ENCODE measurements at regions of chr13 and their contacts with region 1.

Region 1: DNA sequence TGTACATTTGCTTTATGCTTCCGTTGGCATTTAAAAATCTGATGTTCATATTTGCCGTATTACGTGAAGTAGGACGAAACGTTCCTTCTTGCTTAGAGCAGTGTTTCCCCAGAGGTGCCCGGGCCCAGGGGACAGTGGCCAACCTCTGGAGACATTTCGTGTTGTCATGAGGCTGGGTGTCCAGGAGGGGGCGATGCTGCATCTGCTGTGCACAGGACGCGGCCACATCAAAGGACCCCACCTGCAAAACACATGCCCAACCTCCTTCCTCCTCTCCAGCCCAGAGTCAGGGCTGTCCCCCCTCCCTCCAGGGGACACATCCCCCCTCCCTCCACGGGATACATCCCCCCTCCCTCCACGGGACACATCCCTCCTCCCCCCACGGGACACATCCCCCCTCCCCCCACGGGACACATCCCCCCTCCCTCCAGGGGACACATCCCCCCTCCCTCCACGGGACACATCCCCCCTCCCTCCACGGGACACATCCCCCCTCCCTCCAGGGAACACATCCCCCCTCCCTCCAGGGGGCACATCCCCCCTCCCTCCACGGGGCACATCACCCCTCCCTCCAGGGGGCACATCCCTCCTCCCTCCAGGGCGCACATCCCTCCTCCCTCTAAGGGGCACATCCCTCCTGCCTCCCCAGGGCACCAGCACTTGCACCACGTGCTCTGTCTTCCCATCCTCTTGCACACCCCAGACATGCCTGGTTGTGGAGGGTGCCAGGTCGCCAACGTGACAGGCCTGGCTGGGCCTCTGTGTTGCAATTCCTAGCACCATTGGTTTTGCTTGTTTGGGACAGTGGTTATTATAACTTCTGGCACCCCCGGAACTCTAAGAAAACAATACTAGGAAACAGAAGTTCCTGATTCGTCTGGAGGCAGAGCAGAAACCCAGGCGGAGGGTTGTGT is 46.7 kb downstream of the GAS6 start:
- DNase-seq: no peak
- H3K4me3 ChIP-seq: no peak overlapping the region
- H3K27ac ChIP-seq: peak overlapping the region; percentile 93
- H3K4me1 ChIP-seq: peaks cover 58% of the 10 kb centered on the region
- H3K27me3 ChIP-seq: no peaks in the 10 kb centered on the region
- CTCF ChIP-seq: peak; percentile 79 to 90 (median 83)
- POLR2A ChIP-seq: no peak

Region 2: DNA sequence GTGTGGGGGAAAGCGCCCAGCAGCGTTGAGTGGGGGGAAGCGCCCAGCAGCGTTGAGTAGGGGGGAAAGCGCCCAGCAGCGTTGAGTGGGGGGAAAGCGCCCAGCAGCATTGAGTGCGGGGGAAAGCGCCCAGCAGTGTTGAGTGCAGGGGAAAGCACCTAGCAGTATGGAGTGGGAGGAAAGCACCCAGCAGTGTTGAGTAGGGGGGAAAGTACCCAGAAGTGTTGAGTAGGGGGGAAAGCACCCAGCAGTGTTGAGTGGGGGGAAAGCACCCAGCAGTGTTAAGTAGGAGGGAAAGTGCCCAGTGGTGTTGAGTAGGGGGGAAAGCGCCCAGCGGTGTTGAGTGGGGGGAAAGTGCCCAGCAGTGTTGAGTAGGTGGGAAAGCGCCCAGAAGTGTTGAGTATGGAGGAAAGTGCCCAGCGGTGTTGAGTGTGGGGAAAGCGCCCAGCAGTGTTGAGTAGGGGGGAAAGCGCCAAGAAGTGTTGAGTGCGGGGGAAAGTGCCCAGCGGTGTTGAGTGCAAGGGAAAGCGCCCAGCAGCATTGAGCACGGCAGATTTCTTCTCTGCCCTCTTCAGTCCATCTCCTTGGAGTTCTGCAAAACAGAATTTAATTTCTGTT is 989.0 kb before region 1 on chr13:
- intact Hi-C with region 1: no loop called
- DNase-seq: no peak
- H3K4me3 ChIP-seq: no peak overlapping the region
- H3K27ac ChIP-seq: no peak overlapping the region
- H3K4me1 ChIP-seq: no peaks in the 10 kb centered on the region
- H3K27me3 ChIP-seq: no peaks in the 10 kb centered on the region
- CTCF ChIP-seq: no peak
- POLR2A ChIP-seq: no peak

Region 3: DNA sequence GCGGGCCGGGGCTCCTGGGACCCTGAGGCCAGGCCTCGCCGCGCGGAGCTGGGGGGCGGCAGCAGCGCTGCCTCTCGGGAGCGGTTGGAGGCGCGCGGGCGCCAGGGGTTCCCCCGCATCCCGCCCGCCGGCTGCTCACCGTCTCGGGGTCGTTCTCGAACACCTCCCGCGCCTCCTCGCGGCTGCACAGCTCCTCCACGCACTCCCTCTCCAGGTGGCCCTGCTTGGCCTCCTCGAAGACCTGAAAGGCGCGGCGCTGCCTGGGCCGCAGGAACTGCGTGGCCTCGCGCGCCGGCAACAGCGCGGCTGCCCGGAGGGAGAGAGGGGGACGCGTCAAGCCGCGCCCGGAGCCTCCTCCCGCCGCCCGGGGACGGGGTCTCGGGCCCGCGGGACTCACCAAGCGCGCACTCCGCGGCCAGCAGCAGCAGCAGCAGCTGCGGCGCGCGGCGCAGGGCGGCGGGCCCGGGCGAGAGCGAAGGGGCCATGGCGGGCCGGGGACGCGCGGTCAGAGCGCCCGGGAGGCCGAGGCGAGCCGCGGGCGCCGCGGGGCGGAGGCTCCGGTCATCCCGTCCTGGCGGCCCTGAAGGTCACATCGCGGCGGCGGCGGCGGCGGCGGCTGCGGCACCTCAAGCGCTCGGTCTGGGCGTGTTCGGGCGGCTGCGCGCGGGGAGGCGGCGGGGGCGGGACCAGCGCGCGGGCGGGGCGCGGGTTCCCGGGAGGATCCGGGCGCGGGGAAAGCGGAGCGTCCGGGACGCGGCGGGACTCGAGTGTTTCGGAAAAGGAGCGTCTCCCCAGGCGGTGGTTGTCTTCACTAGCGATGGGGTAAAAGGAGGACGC is 46.5 kb after region 1 on chr13 and contains the start of gene GAS6:
- intact Hi-C with region 1: loop called (anchors 1 kb)
- DNase-seq: no peak
- H3K4me3 ChIP-seq: peak within 1 kb of the TSS; percentile 63 to 98
- H3K27ac ChIP-seq: peak within 1 kb of the TSS; percentile 95
- H3K4me1 ChIP-seq: peaks cover 39% of the 10 kb centered on the region
- H3K27me3 ChIP-seq: no peaks in the 10 kb centered on the region
- CTCF ChIP-seq: no peak
- POLR2A ChIP-seq: peak in 1 of 2 donors; percentile 54
- total RNA-seq, gene GAS6: 215 TPM

Region 4: DNA sequence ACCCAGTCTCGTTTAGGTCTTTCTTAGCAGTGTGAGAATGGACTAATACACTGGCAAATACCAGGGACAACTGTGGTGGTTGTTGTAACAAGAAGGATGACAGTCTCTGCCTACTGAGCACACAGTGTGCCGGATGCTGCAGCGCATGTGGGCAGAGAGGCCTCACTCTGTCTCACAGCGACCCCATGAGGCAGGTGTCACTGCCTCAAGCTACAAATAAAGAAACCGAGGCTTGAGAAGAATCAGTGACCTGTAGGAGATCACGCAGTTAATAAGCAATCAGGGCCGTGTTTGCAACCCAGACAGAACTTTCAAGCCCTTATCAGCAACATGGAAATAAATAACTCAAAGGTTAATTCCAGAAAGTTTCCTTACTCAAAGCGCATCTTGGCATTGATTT is 87.2 kb after region 1 on chr13:
- intact Hi-C with region 1: loop called (anchors 2 kb)
- DNase-seq: no peak
- H3K4me3 ChIP-seq: no peak overlapping the region
- H3K27ac ChIP-seq: no peak overlapping the region
- H3K4me1 ChIP-seq: peaks cover 17% of the 10 kb centered on the region
- H3K27me3 ChIP-seq: no peaks in the 10 kb centered on the region
- CTCF ChIP-seq: peak in 2 of 3 experiments; percentile 34 to 39
- POLR2A ChIP-seq: no peak

Region 5: GRCh38 chr13:113928685-113929627 is 111.8 kb after region 1 on chr13:
- intact Hi-C with region 1: loop called (anchors 5 kb)
- DNase-seq: peak in 1 of 2 donors; percentile 96
- H3K4me3 ChIP-seq: no peak overlapping the region
- H3K27ac ChIP-seq: peak overlapping the region; percentile 60
- H3K4me1 ChIP-seq: peaks cover 38% of the 10 kb centered on the region
- H3K27me3 ChIP-seq: no peaks in the 10 kb centered on the region
- CTCF ChIP-seq: no peak
- POLR2A ChIP-seq: no peak

Region 6: DNA sequence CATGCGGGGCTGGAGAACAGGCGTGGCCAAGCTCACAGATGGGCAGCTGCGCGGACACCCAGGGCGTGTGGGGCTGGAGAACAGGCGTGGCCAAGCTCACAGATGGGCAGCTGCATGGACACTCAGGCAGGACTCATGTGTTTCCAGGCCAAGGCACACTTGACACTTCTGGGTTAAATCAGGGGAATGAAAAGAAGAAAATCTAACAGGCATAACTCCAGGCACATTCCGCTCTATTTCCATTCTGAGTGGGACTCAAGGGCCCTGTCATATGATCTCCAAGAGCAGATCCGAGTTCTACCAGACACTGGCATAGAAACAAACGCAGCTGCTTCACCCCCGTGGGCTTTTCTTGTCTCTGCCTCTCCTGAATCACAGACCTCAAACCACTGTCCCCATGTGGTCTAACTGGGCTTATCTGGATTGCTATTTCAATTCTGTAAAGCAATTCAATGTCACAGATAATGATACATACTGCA is 174.0 kb after region 1 on chr13:
- intact Hi-C with region 1: no loop called
- DNase-seq: no peak
- H3K4me3 ChIP-seq: no peak overlapping the region
- H3K27ac ChIP-seq: no peak overlapping the region
- H3K4me1 ChIP-seq: no peaks in the 10 kb centered on the region
- H3K27me3 ChIP-seq: no peaks in the 10 kb centered on the region
- CTCF ChIP-seq: no peak
- POLR2A ChIP-seq: no peak

Region 7: DNA sequence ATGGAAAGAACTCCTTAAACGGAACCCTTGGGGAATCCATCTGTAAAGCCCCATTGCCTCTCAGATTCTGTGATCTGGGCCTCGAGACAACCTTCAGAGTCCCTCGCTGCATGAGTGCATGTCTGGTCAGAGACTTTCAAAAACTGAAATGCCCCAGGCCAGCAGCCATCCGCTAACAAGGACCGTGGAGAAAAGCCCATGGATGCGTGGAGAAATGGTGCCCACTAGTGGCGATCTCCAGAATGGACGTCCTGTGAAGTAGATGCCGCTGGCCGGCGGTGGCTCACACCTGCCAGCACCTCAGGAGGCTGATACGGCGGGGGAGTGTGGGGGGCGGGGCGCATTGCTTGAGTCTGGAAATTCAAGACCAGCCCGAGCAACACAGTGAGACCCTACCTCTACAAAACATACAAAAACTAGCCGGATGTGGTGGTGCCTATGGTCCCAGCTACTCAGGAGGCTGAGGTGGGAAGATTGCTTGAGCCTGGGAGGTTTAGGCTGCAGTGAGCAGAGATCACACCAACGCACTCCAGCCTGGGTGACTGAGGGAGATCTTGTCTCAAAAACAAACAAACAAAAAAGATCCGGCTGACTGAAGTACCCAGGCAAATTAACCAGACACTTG is 409.6 kb after region 1 on chr13:
- intact Hi-C with region 1: loop called (anchors 5 kb)
- DNase-seq: peak in 1 of 2 donors; percentile 89
- H3K4me3 ChIP-seq: no peak overlapping the region
- H3K27ac ChIP-seq: no peak overlapping the region
- H3K4me1 ChIP-seq: peaks cover 6% of the 10 kb centered on the region
- H3K27me3 ChIP-seq: no peaks in the 10 kb centered on the region
- CTCF ChIP-seq: peak; percentile 82 to 98 (median 86)
- POLR2A ChIP-seq: no peak

Measured in vagina (tissue), 2 donors.